CD14-positive monocyte (primary cell): ENCODE measurements at regions of chr17 and their contacts with region 1.

Region 1: DNA sequence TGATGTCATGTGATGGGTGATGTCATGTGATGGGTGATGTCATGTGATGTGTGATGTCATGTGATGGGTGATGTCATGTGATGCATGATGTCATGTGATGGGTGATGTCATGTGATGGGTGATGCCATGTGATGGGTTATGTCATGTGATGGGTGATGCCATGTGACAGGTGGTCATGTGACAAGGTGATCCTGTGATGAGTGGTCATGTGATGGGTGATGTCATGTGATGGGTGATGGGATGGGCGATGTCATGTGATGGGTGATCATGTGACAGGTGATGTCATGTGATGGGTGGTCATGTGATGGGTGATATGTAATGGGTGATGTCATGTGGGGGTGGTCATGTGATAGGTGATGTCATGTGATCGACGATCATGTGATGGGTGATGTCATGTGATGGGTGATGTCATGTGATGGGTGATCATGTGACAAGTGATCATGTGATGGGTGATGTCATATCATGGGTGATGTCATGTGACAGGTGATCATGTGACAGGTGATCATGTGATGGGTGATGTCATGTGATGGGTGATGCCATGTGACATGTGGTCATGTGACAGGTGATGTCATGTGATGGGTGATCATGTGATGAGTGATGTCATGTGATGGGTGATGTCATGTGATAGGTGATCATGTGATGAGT is 17.2 kb downstream of the CD300LB start:
- DNase-seq: peak; percentile 39 to 93 (median 84)
- H3K4me3 ChIP-seq: no peak overlapping the region
- H3K4me3 Mint-ChIP-seq: peak overlapping the region in 1 of 2 donors; percentile 0
- H3K27ac ChIP-seq: peak overlapping the region; percentile 77 to 97
- H3K27ac Mint-ChIP-seq: peak overlapping the region; percentile 97 to 100 (median 99)
- H3K4me1 ChIP-seq: peaks cover 21 to 37% of the 10 kb centered on the region in 2 donors
- H3K4me1 Mint-ChIP-seq: peaks cover 42% of the 10 kb centered on the region
- H3K27me3 ChIP-seq: no peaks in the 10 kb centered on the region
- H3K27me3 Mint-ChIP-seq: peaks cover 0 to 20% (median 9%) of the 10 kb centered on the region in 3 donors
- CTCF ChIP-seq: no peak

Region 2: GRCh38 chr17:74566132-74566753 is 52.1 kb after region 1 on chr17:
- intact Hi-C with region 1: loop called in 1 of 2 experiments (anchors 2 kb)
- DNase-seq: peak in 2 of 3 donors; percentile 58 to 59
- H3K4me3 ChIP-seq: peak overlapping the region in 2 of 3 experiments; percentile 37 to 79
- H3K4me3 Mint-ChIP-seq: peak overlapping the region; percentile 73 to 91
- H3K27ac ChIP-seq: peak overlapping the region; percentile 26 to 82
- H3K27ac Mint-ChIP-seq: peak overlapping the region; percentile 14 to 95 (median 86)
- H3K4me1 ChIP-seq: peaks cover 75 to 87% of the 10 kb centered on the region in 2 donors
- H3K4me1 Mint-ChIP-seq: peaks cover 64% of the 10 kb centered on the region
- H3K27me3 ChIP-seq: no peaks in the 10 kb centered on the region
- H3K27me3 Mint-ChIP-seq: peaks cover 3 to 9% (median 4%) of the 10 kb centered on the region in 3 donors
- CTCF ChIP-seq: peak; percentile 82

Region 3: GRCh38 chr17:74639704-74640151 is 125.6 kb after region 1 on chr17:
- intact Hi-C with region 1: loop called in 1 of 2 experiments (anchors 2 kb)
- DNase-seq: peak; percentile 89 to 94 (median 90)
- H3K4me3 ChIP-seq: peak overlapping the region in 1 of 3 experiments; percentile 19
- H3K4me3 Mint-ChIP-seq: peak overlapping the region; percentile 38 to 39
- H3K27ac ChIP-seq: peak overlapping the region; percentile 99 to 100
- H3K27ac Mint-ChIP-seq: peak overlapping the region; percentile 99 to 100 (median 100)
- H3K4me1 ChIP-seq: peaks cover 96 to 100% of the 10 kb centered on the region in 2 donors
- H3K4me1 Mint-ChIP-seq: peaks cover 93% of the 10 kb centered on the region
- H3K27me3 ChIP-seq: no peaks in the 10 kb centered on the region
- H3K27me3 Mint-ChIP-seq: peaks cover 0 to 4% (median 1%) of the 10 kb centered on the region in 3 donors
- CTCF ChIP-seq: no peak